K562 (cell line): ENCODE measurements at regions of chr1 and their contacts with region 1.

Region 1: DNA sequence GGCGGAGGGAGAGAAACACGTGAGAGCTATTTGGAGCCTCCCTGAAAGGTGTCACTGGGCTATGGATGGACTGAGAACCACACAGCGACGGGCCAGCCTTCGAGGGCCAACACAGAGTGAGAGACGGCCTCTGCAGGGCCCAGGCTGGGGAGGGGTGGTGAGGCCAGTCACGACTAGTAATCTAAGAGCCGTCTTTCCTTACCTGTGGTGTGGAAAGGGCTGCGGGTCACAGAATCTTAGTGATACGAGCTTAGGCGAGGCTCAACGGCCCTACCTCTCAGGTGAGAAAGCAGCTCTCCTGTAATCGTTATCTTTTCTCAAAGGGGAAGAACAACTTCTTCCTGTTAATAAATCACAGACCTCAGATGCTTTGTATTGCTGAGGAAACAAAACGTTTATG is 33.4 kb upstream of the COX20 start:
- DNase-seq: no peak
- ATAC-seq: peak; percentile 63
- H3K4me3 ChIP-seq: no peak overlapping the region
- H3K27ac ChIP-seq: no peak overlapping the region
- H3K4me1 ChIP-seq: no peaks in the 10 kb centered on the region; a peak in 2 of 5 replicates
- H3K27me3 ChIP-seq: peaks cover 39 to 73% of the 10 kb centered on the region in 2 experiments
- CTCF ChIP-seq: no peak
- EP300 ChIP-seq: no peak
- POLR2A ChIP-seq: no peak
- RAD21 ChIP-seq: no peak

Region 2: GRCh38 chr1:244918421-244919319 is 116.6 kb after region 1 on chr1:
- CTCF ChIA-PET with region 1: no interaction called
- POLR2A ChIA-PET with region 1: no interaction called
- in situ Hi-C with region 1: no loop called
- intact Hi-C with region 1: loop called (anchors 2 kb)
- DNase-seq: peak; percentile 84 to 86 (median 85)
- ATAC-seq: peak; percentile 92
- H3K4me3 ChIP-seq: peak overlapping the region; percentile 36
- H3K27ac ChIP-seq: peak overlapping the region; percentile 64
- H3K4me1 ChIP-seq: peaks cover 7 to 13% of the 10 kb centered on the region in 2 experiments; a peak in 3 of 5 replicates
- H3K27me3 ChIP-seq: no peaks in the 10 kb centered on the region
- CTCF ChIP-seq: 0 out of 6 replicates have a peak, but pooled peaks of 1 of the 3 experiments have one; percentile 36
- EP300 ChIP-seq: no peak
- POLR2A ChIP-seq: peak; percentile 78
- RAD21 ChIP-seq: peak in 1 of 2 experiments; percentile 17; a peak in 1 of 4 replicates